H1 (cell line): ENCODE measurements at regions of chr14 and their contacts with region 1.

Region 1: GRCh38 chr14:88189417-88190191 is 133.5 kb downstream of the KCNK10 start:
- DNase-seq: peak in 1 of 2 experiments; percentile 85
- H3K4me3 ChIP-seq: peak overlapping the region in 2 of 4 experiments; percentile 23 to 41; a peak in 2 of 8 replicates
- H3K27ac ChIP-seq: no peak overlapping the region
- H3K4me1 ChIP-seq: no peaks in the 10 kb centered on the region; a peak in 3 of 7 replicates
- H3K27me3 ChIP-seq: no peaks in the 10 kb centered on the region; a peak in 1 of 7 replicates
- CTCF ChIP-seq: peak in 2 of 3 experiments; percentile 80 to 83; a peak in 3 of 4 replicates
- EP300 ChIP-seq: no peak
- POLR2A ChIP-seq: no peak
- RAD21 ChIP-seq: peak; percentile 87 to 91

Region 2: DNA sequence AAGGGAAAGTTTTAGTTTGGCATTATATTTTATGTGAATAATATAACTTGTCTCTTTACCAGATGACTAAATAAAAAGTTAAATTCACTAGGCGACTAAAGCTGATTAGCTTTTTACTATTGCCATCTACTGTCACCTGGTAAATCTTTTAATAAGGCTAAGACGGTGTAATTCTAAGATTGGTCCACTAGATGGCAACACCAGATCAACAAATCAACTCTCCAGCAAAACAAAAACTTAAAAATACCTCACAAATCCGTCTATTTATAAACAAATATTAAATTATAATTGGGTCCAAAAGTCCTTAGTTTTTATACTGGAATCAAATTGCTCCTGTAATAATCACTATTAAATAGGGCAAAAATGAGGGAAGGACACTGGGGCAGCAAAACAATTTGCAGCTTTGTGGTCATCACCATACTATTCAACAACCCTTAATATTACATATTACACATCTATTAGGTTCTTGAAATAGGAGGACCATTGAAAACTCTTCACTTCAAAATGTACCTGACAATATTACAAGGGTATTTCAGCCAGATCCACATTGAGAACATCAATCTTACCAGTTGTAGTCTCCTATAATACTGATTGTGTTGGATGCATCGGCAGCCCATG is 244.5 kb before region 1 on chr14:
- CTCF ChIA-PET with region 1: interaction called, 21 read pairs
- POLR2A ChIA-PET with region 1: no interaction called
- DNase-seq: no peak
- H3K4me3 ChIP-seq: no peak overlapping the region
- H3K27ac ChIP-seq: no peak overlapping the region
- H3K4me1 ChIP-seq: no peaks in the 10 kb centered on the region
- H3K27me3 ChIP-seq: no peaks in the 10 kb centered on the region
- CTCF ChIP-seq: peak in 2 of 3 experiments; percentile 37 to 47; a peak in 2 of 4 replicates
- EP300 ChIP-seq: no peak
- POLR2A ChIP-seq: no peak
- RAD21 ChIP-seq: peak; percentile 57 to 67

Region 3: DNA sequence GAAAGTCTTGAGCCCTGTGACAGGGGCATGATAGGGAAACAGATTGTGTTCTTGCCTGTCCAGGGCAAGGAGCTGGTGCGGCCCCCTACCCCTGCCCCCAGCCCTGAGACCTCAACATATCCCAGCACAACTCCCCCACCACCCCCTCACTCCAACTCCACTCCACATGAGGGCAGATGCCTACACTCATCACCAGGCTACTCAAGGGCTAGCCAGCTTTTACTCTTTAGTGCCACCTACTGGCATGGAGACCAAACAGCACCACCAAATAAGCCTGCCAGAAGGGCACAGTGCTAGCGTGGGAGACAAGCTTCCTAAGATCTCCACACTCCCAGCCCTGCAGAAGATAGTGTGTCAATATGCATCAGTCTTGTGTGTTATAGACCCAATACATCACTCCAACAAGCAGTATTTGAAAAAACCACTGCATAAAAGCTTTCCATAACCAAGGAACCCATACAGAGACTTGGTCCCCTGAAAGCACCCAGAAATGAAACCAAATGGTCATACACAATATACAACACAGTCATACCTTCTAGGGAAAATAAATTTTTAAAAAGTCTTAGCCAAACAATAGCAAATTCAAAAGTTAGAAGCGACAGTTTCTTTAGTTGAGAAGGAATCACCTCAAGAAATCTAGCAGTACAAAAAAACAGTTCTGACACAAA is 21.0 kb before region 1 on chr14:
- CTCF ChIA-PET with region 1: interaction called, 45 read pairs
- POLR2A ChIA-PET with region 1: no interaction called
- DNase-seq: peak in 1 of 2 experiments; percentile 73
- H3K4me3 ChIP-seq: no peak overlapping the region
- H3K27ac ChIP-seq: no peak overlapping the region
- H3K4me1 ChIP-seq: no peaks in the 10 kb centered on the region
- H3K27me3 ChIP-seq: no peaks in the 10 kb centered on the region
- CTCF ChIP-seq: peak; percentile 76 to 94 (median 93)
- EP300 ChIP-seq: no peak
- POLR2A ChIP-seq: no peak
- RAD21 ChIP-seq: peak; percentile 81 to 89

Region 4: GRCh38 chr14:88233915-88234314 is 44.3 kb after region 1 on chr14:
- CTCF ChIA-PET with region 1: interaction called, 114 read pairs
- POLR2A ChIA-PET with region 1: no interaction called
- DNase-seq: peak in 1 of 2 experiments; percentile 3
- H3K4me3 ChIP-seq: no peak overlapping the region
- H3K27ac ChIP-seq: no peak overlapping the region
- H3K4me1 ChIP-seq: peaks cover 0 to 6% (median 0%) of the 10 kb centered on the region in 4 experiments; a peak in 1 of 7 replicates
- H3K27me3 ChIP-seq: no peaks in the 10 kb centered on the region
- CTCF ChIP-seq: peak; percentile 34 to 81 (median 68)
- EP300 ChIP-seq: no peak
- POLR2A ChIP-seq: no peak
- RAD21 ChIP-seq: peak; percentile 70 to 77

Region 5: GRCh38 chr14:88481794-88482193 is 292.2 kb after region 1 on chr14:
- CTCF ChIA-PET with region 1: interaction called, 15 read pairs
- POLR2A ChIA-PET with region 1: no interaction called
- DNase-seq: no peak
- H3K4me3 ChIP-seq: no peak overlapping the region
- H3K27ac ChIP-seq: 0 out of 2 replicates have a peak overlapping the region, but pooled peaks have one; percentile 15
- H3K4me1 ChIP-seq: peaks cover 6 to 21% (median 13%) of the 10 kb centered on the region in 4 experiments; a peak in 6 of 7 replicates
- H3K27me3 ChIP-seq: no peaks in the 10 kb centered on the region
- CTCF ChIP-seq: no peak
- EP300 ChIP-seq: no peak
- POLR2A ChIP-seq: no peak
- RAD21 ChIP-seq: no peak